ENCODE measurements at regions of chr17 and their contacts with region 1.

Region 1: GRCh38 chr17:63911657-63912426 is 784 bp upstream of the CSHL1 start:
- DNase-seq: peak in 1 of 2 experiments; percentile 87
- H3K4me3 ChIP-seq: no peak overlapping the region
- H3K27ac ChIP-seq: no peak overlapping the region
- H3K4me1 ChIP-seq: peaks cover 0 to 2% (median under 1%) of the 10 kb centered on the region in 4 experiments; a peak in 2 of 7 replicates
- H3K27me3 ChIP-seq: no peaks in the 10 kb centered on the region
- CTCF ChIP-seq: peak; percentile 63 to 83 (median 69)
- EP300 ChIP-seq: no peak
- POLR2A ChIP-seq: no peak
- RAD21 ChIP-seq: peak; percentile 62 to 65

Region 2: GRCh38 chr17:63881876-63882601 is 29.8 kb before region 1 on chr17 and contains the start of gene GH2:
- CTCF ChIA-PET with region 1: interaction called, 87 read pairs
- POLR2A ChIA-PET with region 1: interaction called, 3 read pairs
- DNase-seq: peak in 1 of 2 experiments; percentile 88
- H3K4me3 ChIP-seq: peak within 1 kb of the TSS in 2 of 4 experiments; percentile 2 to 33; a peak in 3 of 8 replicates
- H3K27ac ChIP-seq: no peak within 1 kb of the TSS
- H3K4me1 ChIP-seq: peaks cover 3 to 15% (median 8%) of the 10 kb centered on the region in 4 experiments
- H3K27me3 ChIP-seq: no peaks in the 10 kb centered on the region
- CTCF ChIP-seq: peak; percentile 59 to 76 (median 72)
- EP300 ChIP-seq: no peak
- POLR2A ChIP-seq: no peak
- RAD21 ChIP-seq: peak; percentile 10 to 30; a peak in 2 of 4 replicates
- total RNA-seq, gene GH2: 0.60 and 1.2 TPM in 2 replicates

Region 3: DNA sequence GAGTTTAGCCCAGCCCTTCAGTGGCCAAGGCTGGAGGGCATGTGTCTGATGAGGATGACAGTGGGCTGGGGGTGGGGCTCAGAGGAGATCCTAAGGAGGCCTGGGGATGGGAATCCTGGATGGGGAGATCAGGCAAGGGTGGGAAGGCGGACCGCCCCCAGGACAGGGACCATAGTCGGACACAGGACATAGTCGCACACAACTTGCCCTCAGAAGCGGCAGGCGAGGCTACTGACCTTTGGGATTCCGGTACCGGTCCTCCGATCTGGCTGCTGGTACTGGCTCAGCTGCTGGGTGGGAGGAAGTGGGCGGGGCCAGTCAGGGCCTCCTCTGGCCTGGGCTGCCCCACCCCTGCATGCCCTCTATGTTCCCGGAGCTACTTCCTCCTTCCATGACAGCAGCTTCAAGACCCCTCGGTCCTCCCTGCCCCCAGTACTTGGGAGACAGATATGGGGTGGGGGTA is 19.3 kb after region 1 on chr17:
- CTCF ChIA-PET with region 1: interaction called, 164 read pairs
- POLR2A ChIA-PET with region 1: no interaction called
- DNase-seq: peak in 1 of 2 experiments; percentile 75
- H3K4me3 ChIP-seq: no peak overlapping the region
- H3K27ac ChIP-seq: no peak overlapping the region
- H3K4me1 ChIP-seq: peaks cover 0 to 16% (median 12%) of the 10 kb centered on the region in 4 experiments; a peak in 6 of 7 replicates
- H3K27me3 ChIP-seq: no peaks in the 10 kb centered on the region
- CTCF ChIP-seq: no peak
- EP300 ChIP-seq: no peak
- POLR2A ChIP-seq: no peak
- RAD21 ChIP-seq: no peak

Region 4: GRCh38 chr17:63998050-63998720 is 86.3 kb after region 1 on chr17 and contains the start of gene PRR29:
- CTCF ChIA-PET with region 1: interaction called, 67 read pairs
- POLR2A ChIA-PET with region 1: no interaction called
- DNase-seq: peak in 1 of 2 experiments; percentile 95
- H3K4me3 ChIP-seq: peak within 1 kb of the TSS; percentile 62 to 87 (median 76)
- H3K27ac ChIP-seq: no peak within 1 kb of the TSS
- H3K4me1 ChIP-seq: peaks cover 3 to 14% (median 6%) of the 10 kb centered on the region in 4 experiments
- H3K27me3 ChIP-seq: peaks cover 0 to 28% (median 16%) of the 10 kb centered on the region in 4 experiments; a peak in 5 of 7 replicates
- CTCF ChIP-seq: no peak
- EP300 ChIP-seq: no peak
- POLR2A ChIP-seq: no peak
- RAD21 ChIP-seq: no peak
- total RNA-seq, gene PRR29: 0.61 and 0.67 TPM in 2 replicates